ENCODE measurements at regions of chr16 and their contacts with region 1.

Region 1: GRCh38 chr16:81006814-81007696 is at the starts of genes CENPN and CMC2:
- DNase-seq: peak; percentile 99 to 100 (median 99)
- H3K4me3 ChIP-seq: peak within 1 kb of the TSS; percentile 85 to 86
- H3K4me3 Mint-ChIP-seq: peak within 1 kb of the TSS; percentile 93 to 99 (median 94)
- H3K27ac ChIP-seq: peak within 1 kb of the TSS; percentile 95
- H3K27ac Mint-ChIP-seq: peak within 1 kb of the TSS; percentile 97 to 100 (median 100)
- H3K4me1 ChIP-seq: peaks cover 47% of the 10 kb centered on the region
- H3K4me1 Mint-ChIP-seq: peaks cover 28 to 51% (median 40%) of the 10 kb centered on the region in 4 donors
- H3K27me3 ChIP-seq: no peaks in the 10 kb centered on the region
- H3K27me3 Mint-ChIP-seq: no peaks in the 10 kb centered on the region
- total RNA-seq, gene CENPN: 3.4 to 4.0 TPM
- total RNA-seq, gene CMC2: 39.7 to 39.9 TPM

Region 2: GRCh38 chr16:80540516-80541272 is 466.4 kb before region 1 on chr16 and contains the start of gene DYNLRB2:
- CTCF ChIA-PET with region 1: no interaction called
- POLR2A ChIA-PET with region 1: no interaction called
- intact Hi-C with region 1: loop called (anchors 2 kb)
- DNase-seq: peak; percentile 89 to 96 (median 95)
- H3K4me3 ChIP-seq: peak within 1 kb of the TSS; percentile 57 to 97
- H3K4me3 Mint-ChIP-seq: peak within 1 kb of the TSS; percentile 91 to 98 (median 96)
- H3K27ac ChIP-seq: peak within 1 kb of the TSS; percentile 67
- H3K27ac Mint-ChIP-seq: peak within 1 kb of the TSS; percentile 95 to 99 (median 98)
- H3K4me1 ChIP-seq: peaks cover 12% of the 10 kb centered on the region
- H3K4me1 Mint-ChIP-seq: peaks cover 8 to 21% (median 14%) of the 10 kb centered on the region in 4 donors
- H3K27me3 ChIP-seq: no peaks in the 10 kb centered on the region
- H3K27me3 Mint-ChIP-seq: peaks cover 1 to 7% of the 10 kb centered on the region in 2 donors
- total RNA-seq, gene DYNLRB2: 0.78 TPM in 1 of 2 experiments, not detected in the other

Region 3: DNA sequence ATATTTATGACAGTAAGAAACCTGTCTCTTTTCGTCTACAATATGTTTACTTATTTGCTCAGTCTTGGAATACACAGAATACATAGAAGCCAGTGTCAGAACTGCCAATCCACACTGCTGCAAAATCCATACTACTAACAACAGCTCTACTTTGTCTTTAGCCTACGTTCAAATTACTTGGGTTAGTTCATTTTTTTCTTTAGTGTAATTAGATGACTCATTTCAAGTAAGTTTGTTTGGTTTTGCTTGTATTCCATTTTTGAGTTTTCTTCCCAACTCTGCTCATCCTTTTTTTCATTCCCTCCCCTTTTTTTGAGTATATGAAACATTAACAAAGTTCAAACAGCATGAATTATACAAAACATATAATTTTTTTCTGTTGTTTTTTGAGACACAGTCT is 17.3 kb before region 1 on chr16:
- CTCF ChIA-PET with region 1: interaction called, 19 read pairs
- POLR2A ChIA-PET with region 1: interaction called, 5 read pairs
- intact Hi-C with region 1: no loop called
- DNase-seq: no peak
- H3K4me3 ChIP-seq: no peak overlapping the region
- H3K4me3 Mint-ChIP-seq: no peak overlapping the region
- H3K27ac ChIP-seq: no peak overlapping the region
- H3K27ac Mint-ChIP-seq: no peak overlapping the region
- H3K4me1 ChIP-seq: peaks cover 18% of the 10 kb centered on the region
- H3K4me1 Mint-ChIP-seq: peaks cover 26 to 43% (median 43%) of the 10 kb centered on the region in 4 donors
- H3K27me3 ChIP-seq: no peaks in the 10 kb centered on the region
- H3K27me3 Mint-ChIP-seq: no peaks in the 10 kb centered on the region

Region 4: GRCh38 chr16:81035398-81035974 is 28.4 kb after region 1 on chr16 and contains the start of gene ATMIN:
- CTCF ChIA-PET with region 1: interaction called, 91 read pairs
- POLR2A ChIA-PET with region 1: interaction called, 66 read pairs
- intact Hi-C with region 1: loop called (anchors 1 kb)
- DNase-seq: peak; percentile 81 to 91 (median 89)
- H3K4me3 ChIP-seq: peak within 1 kb of the TSS; percentile 56 to 68
- H3K4me3 Mint-ChIP-seq: peak within 1 kb of the TSS; percentile 83 to 91 (median 88)
- H3K27ac ChIP-seq: peak within 1 kb of the TSS; percentile 50
- H3K27ac Mint-ChIP-seq: peak within 1 kb of the TSS; percentile 68 to 89 (median 85)
- H3K4me1 ChIP-seq: peaks cover 29% of the 10 kb centered on the region
- H3K4me1 Mint-ChIP-seq: peaks cover 18 to 42% (median 28%) of the 10 kb centered on the region in 4 donors
- H3K27me3 ChIP-seq: no peaks in the 10 kb centered on the region
- H3K27me3 Mint-ChIP-seq: no peaks in the 10 kb centered on the region
- total RNA-seq, gene ATMIN: 39.3 to 45.4 TPM

Region 5: DNA sequence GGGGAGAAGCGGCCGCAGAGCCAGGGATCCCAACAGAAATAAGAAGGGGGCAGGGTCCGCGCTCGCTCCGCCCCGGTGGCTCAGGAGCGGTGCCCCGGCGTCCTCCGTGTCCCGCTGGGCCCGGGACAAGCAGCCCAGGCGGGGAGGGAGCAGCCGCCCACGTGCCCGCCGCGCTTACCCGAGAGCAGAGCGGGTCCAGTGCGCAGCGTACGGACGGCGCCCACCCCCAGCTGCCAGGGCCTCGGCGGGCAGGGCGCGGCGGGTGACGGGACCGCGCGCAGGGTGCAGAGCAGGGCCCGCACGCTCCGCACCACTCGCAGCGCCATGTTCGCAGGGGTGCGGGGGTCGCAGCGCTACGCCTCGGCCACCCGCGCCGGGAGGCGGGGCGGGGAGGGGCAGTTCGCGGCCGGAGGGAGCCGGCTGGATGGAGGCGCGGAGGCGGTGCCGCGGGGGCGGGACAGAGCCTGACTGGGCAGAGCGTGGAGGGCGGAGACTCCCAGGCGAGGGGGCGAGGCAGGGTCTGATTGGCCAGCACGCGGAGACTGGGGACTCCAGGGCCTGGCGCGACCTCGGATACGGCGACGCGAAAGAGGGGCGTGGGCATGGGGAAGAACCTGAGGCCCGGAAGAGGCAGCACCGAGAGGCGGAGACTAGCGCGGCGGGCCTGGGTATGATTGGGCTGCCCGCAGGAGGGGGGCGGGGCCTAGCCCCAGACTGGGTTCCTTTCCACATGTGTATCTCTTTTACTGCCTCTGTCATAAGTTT is 89.1 kb after region 1 on chr16 and contains the start of gene GCSH:
- CTCF ChIA-PET with region 1: interaction called, 3 read pairs
- POLR2A ChIA-PET with region 1: interaction called, 3 read pairs
- intact Hi-C with region 1: loop called (anchors 1 kb)
- DNase-seq: peak; percentile 97 to 99 (median 99)
- H3K4me3 ChIP-seq: peak within 1 kb of the TSS; percentile 69 to 73
- H3K4me3 Mint-ChIP-seq: peak within 1 kb of the TSS; percentile 67 to 90 (median 85)
- H3K27ac ChIP-seq: peak within 1 kb of the TSS; percentile 37
- H3K27ac Mint-ChIP-seq: peak within 1 kb of the TSS; percentile 18 to 83 (median 48)
- H3K4me1 ChIP-seq: peaks cover 11% of the 10 kb centered on the region
- H3K4me1 Mint-ChIP-seq: peaks cover 4 to 17% (median 5%) of the 10 kb centered on the region in 4 donors
- H3K27me3 ChIP-seq: no peaks in the 10 kb centered on the region
- H3K27me3 Mint-ChIP-seq: no peaks in the 10 kb centered on the region
- total RNA-seq, gene GCSH: 3.5 to 4.9 TPM

Region 6: GRCh38 chr16:81715358-81716196 is 708.5 kb after region 1 on chr16:
- CTCF ChIA-PET with region 1: no interaction called
- POLR2A ChIA-PET with region 1: interaction called, 6 read pairs
- intact Hi-C with region 1: loop called (anchors 5 kb)
- DNase-seq: peak; percentile 73 to 82 (median 75)
- H3K4me3 ChIP-seq: peak overlapping the region in 1 of 2 donors; percentile 48
- H3K4me3 Mint-ChIP-seq: peak overlapping the region; percentile 74 to 91 (median 84)
- H3K27ac ChIP-seq: peak overlapping the region; percentile 45
- H3K27ac Mint-ChIP-seq: peak overlapping the region; percentile 86 to 97 (median 95)
- H3K4me1 ChIP-seq: peaks cover 49% of the 10 kb centered on the region
- H3K4me1 Mint-ChIP-seq: peaks cover 37 to 54% (median 47%) of the 10 kb centered on the region in 4 donors
- H3K27me3 ChIP-seq: no peaks in the 10 kb centered on the region
- H3K27me3 Mint-ChIP-seq: no peaks in the 10 kb centered on the region

Measured in CD4-positive, alpha-beta memory T cell (primary cell).